ENCODE measurements at regions of chr11 and their contacts with region 1.

Region 1: DNA sequence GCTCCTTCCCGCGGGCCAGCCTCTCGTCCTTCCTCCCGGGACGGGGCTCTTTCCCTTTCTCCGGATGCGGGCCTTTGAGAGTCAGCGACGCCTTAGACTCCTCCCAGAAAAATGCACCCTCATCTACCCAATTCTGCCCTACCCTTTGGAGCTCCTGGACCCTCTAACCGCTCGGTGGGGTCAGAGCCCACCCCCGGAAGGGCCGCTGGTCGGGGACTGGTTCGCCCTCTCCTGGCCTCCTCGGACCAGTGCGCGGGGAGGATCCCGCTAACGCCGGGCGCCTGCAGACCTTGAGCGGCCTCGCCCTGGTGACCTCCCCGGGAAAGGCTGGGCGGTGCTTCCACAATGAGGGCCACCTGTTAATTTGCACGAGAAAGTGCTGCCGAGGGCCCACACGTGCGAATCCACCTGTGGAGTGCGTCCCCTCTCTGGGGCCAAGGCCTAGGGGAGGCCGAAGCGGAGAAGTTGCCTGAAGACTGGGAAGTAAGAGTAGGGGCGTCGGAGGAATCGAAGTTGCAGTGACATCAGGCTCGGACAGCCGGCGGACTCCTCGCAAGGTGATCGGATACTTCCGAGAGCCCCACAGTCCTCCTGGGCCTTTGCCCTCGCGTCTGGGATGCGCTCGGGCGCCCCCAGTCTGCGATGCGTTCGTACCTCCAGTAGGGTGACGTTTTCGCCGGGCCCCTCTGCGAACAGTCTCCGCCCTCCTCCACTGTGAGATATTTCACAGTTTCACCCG is 61.5 kb downstream of the ENDOD1 start:
- DNase-seq: peak; percentile 93
- H3K4me3 Mint-ChIP-seq: peak overlapping the region; percentile 85
- H3K27ac Mint-ChIP-seq: peak overlapping the region; percentile 86
- H3K4me1 Mint-ChIP-seq: peaks cover 45% of the 10 kb centered on the region
- H3K27me3 Mint-ChIP-seq: peaks cover 4% of the 10 kb centered on the region

Region 2: DNA sequence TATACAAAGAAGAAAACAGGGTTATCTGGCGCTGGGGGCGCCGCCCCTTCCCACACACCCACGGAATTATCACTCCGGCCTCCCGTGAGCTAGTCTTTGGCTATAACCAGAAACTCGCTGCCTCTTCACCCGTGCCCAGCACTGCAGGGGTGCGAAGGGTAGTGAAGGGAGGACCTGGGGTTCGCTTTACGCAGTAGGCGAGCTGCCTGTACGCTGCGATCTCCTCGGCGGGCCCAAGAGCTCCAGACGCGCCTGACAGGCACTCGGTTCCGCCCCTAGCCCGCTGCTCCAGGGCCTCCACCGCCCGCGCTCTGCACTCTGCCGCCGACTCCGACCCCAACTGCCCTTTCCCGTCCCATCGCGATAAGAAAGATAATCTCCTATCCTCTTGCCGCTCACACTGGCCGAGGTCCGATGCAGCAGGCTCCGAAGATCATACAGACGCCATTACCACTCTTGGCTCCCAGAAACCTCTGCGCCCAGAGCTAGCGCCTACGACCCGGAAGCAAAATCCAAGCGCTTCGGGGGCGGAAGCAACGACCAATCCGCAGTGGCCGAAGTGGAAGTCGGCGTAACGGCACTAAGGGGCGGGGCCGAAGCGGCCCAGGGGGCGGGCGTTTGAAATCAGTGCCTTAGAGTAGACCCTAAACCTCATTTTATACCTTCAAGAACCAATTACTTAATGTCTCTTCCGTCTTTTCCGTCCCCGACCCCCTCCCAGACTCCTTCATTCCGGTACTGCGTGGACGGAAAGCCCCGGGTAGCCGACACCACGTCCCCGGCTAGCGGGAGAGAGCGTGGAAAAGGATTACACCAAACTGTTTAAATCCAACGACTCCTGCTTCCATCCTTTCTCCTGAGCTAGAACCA is 177.8 kb before region 1 on chr11 and contains the starts of genes CWC15 and KDM4D:
- CTCF ChIA-PET with region 1: interaction called, 5 read pairs
- POLR2A ChIA-PET with region 1: interaction called, 13 read pairs
- DNase-seq: peak; percentile 95
- H3K4me3 Mint-ChIP-seq: peak within 1 kb of the TSS; percentile 99
- H3K27ac Mint-ChIP-seq: peak within 1 kb of the TSS; percentile 88
- H3K4me1 Mint-ChIP-seq: peaks cover 53% of the 10 kb centered on the region
- H3K27me3 Mint-ChIP-seq: no peaks in the 10 kb centered on the region
- total RNA-seq, gene CWC15: 56.5 to 59.1 TPM
- total RNA-seq, gene KDM4D: 0.83 to 1.1 TPM

Region 3: DNA sequence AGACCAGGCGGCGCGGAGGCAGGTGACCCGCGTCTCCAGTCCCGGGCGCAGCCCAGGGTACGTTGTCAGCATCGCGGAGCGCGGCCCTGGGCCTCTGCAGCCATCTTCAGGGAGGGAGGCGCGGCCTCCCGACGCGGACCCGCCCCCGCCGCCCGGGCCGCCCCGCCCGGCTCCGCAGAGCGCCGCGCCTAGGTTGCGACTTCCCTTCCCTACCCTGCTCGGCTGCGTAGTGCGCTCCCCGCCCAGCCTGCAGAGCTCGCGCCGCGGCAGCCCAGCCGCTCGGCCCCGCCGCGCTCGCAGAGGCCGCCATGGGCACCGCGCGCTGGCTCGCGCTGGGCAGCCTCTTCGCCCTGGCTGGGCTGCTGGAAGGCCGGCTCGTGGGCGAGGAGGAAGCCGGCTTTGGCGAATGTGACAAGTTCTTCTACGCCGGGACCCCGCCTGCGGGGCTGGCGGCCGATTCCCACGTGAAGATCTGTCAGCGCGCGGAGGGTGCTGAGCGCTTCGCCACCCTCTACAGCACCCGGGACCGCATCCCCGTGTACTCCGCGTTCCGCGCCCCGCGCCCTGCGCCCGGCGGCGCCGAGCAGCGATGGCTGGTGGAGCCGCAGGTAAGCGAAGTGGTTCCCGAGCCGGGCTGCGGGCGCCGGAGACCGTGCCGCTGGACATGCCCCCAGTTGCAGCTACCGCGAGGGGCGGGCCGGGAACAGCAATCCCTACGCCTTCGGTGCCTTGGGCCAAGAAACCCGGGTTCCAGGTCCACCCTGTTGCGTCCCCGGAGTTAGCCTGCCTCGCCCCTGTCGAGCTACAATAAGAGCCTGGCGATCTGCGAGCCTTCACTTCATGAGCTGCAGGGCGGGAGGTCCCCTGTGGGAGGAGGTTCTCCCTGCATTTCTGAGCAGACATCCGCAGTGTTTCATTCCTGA is 61.2 kb before region 1 on chr11 and contains the start of gene ENDOD1:
- CTCF ChIA-PET with region 1: interaction called, 19 read pairs
- POLR2A ChIA-PET with region 1: interaction called, 25 read pairs
- DNase-seq: peak; percentile 88
- H3K4me3 Mint-ChIP-seq: peak within 1 kb of the TSS; percentile 84
- H3K27ac Mint-ChIP-seq: peak within 1 kb of the TSS; percentile 93
- H3K4me1 Mint-ChIP-seq: peaks cover 67% of the 10 kb centered on the region
- H3K27me3 Mint-ChIP-seq: no peaks in the 10 kb centered on the region
- total RNA-seq, gene ENDOD1: 20.6 to 22.2 TPM

Region 4: GRCh38 chr11:95165638-95166037 is 14.5 kb after region 1 on chr11:
- CTCF ChIA-PET with region 1: interaction called, 16 read pairs
- POLR2A ChIA-PET with region 1: no interaction called
- DNase-seq: no peak
- H3K4me3 Mint-ChIP-seq: no peak overlapping the region
- H3K27ac Mint-ChIP-seq: no peak overlapping the region
- H3K4me1 Mint-ChIP-seq: peaks cover 13% of the 10 kb centered on the region
- H3K27me3 Mint-ChIP-seq: no peaks in the 10 kb centered on the region

Region 5: GRCh38 chr11:95200781-95201457 is 49.8 kb after region 1 on chr11:
- CTCF ChIA-PET with region 1: no interaction called
- POLR2A ChIA-PET with region 1: no interaction called
- DNase-seq: no peak
- H3K4me3 Mint-ChIP-seq: no peak overlapping the region
- H3K27ac Mint-ChIP-seq: no peak overlapping the region
- H3K4me1 Mint-ChIP-seq: no peaks in the 10 kb centered on the region
- H3K27me3 Mint-ChIP-seq: no peaks in the 10 kb centered on the region

Region 6: GRCh38 chr11:95254131-95254704 is 103.1 kb after region 1 on chr11:
- CTCF ChIA-PET with region 1: interaction called, 12 read pairs
- POLR2A ChIA-PET with region 1: interaction called, 7 read pairs
- DNase-seq: peak; percentile 84
- H3K4me3 Mint-ChIP-seq: peak overlapping the region; percentile 76
- H3K27ac Mint-ChIP-seq: peak overlapping the region; percentile 78
- H3K4me1 Mint-ChIP-seq: peaks cover 29% of the 10 kb centered on the region
- H3K27me3 Mint-ChIP-seq: no peaks in the 10 kb centered on the region

Region 7: DNA sequence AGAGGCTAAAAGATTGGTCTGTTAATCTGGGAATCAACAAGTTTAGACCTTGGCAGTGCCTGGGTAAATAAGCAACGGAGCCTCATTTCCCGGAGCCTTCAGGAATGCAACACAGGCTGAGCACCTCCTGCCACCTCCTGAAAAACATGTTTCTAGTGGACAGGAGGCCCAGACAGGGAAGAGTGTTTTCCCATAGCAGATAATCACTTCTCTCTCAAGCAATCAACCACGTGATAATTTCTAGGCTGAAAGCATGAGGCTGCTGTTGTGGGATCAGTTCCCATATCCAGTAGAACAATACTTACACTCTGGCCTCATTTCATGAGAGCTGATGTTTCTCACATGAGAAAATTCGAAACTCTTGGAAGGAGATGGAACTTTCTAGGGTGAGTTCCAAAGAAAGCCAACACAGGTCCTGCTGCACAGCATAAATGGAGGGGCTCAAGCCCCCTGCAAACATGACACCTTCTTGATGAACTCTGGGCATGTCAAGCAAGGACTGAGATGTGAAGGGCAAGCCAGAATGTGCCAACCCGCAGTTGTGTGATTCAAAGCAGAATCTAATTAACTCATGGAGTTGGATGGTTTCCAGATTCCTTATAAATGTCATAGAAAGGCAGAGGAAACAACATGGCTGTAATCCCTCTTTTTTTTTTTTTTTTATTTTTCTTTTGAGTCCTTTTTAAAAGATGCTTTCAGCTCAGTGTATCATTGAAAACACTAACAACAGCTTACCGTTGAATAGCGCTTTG is 308.4 kb after region 1 on chr11:
- CTCF ChIA-PET with region 1: no interaction called
- POLR2A ChIA-PET with region 1: no interaction called
- DNase-seq: no peak
- H3K4me3 Mint-ChIP-seq: no peak overlapping the region
- H3K27ac Mint-ChIP-seq: no peak overlapping the region
- H3K4me1 Mint-ChIP-seq: no peaks in the 10 kb centered on the region
- H3K27me3 Mint-ChIP-seq: no peaks in the 10 kb centered on the region

Region 8: GRCh38 chr11:95699631-95700470 is 548.7 kb after region 1 on chr11:
- CTCF ChIA-PET with region 1: interaction called, 293 read pairs
- POLR2A ChIA-PET with region 1: interaction called, 14 read pairs
- DNase-seq: no peak
- H3K4me3 Mint-ChIP-seq: peak overlapping the region; percentile 53
- H3K27ac Mint-ChIP-seq: peak overlapping the region; percentile 76
- H3K4me1 Mint-ChIP-seq: peaks cover 43% of the 10 kb centered on the region
- H3K27me3 Mint-ChIP-seq: no peaks in the 10 kb centered on the region

Region 9: GRCh38 chr11:95764267-95764898 is 613.3 kb after region 1 on chr11:
- CTCF ChIA-PET with region 1: interaction called, 129 read pairs
- POLR2A ChIA-PET with region 1: interaction called, 9 read pairs
- DNase-seq: no peak
- H3K4me3 Mint-ChIP-seq: no peak overlapping the region
- H3K27ac Mint-ChIP-seq: no peak overlapping the region
- H3K4me1 Mint-ChIP-seq: no peaks in the 10 kb centered on the region
- H3K27me3 Mint-ChIP-seq: no peaks in the 10 kb centered on the region